ENCODE measurements at regions of chr6 and their contacts with region 1.

Region 1: DNA sequence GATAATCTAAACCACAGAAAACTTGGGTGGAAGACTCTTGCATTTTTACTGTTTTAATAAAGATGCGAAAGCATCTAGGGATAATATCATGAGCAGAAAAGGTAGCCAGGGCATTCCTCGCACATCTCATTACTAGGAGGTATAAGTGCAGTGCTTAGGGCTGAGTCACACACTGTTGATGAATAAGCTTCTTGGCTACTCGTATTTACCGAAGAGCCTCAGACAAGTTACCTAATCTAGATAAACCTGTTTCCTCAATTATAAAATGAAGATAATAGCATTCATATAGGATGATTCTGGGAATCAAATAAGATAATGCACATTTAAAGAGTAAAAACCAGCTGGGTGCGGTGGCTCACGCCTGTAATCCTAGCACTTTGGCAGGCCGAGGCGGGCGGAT is 791 bp upstream of the KIAA0319 start:
- DNase-seq: no peak
- H3K4me3 ChIP-seq: no peak overlapping the region
- H3K27ac ChIP-seq: no peak overlapping the region
- H3K4me1 ChIP-seq: peaks cover 9% of the 10 kb centered on the region
- H3K27me3 ChIP-seq: peaks cover 3 to 13% of the 10 kb centered on the region in 2 experiments
- CTCF ChIP-seq: no peak
- POLR2A ChIP-seq: no peak

Region 2: DNA sequence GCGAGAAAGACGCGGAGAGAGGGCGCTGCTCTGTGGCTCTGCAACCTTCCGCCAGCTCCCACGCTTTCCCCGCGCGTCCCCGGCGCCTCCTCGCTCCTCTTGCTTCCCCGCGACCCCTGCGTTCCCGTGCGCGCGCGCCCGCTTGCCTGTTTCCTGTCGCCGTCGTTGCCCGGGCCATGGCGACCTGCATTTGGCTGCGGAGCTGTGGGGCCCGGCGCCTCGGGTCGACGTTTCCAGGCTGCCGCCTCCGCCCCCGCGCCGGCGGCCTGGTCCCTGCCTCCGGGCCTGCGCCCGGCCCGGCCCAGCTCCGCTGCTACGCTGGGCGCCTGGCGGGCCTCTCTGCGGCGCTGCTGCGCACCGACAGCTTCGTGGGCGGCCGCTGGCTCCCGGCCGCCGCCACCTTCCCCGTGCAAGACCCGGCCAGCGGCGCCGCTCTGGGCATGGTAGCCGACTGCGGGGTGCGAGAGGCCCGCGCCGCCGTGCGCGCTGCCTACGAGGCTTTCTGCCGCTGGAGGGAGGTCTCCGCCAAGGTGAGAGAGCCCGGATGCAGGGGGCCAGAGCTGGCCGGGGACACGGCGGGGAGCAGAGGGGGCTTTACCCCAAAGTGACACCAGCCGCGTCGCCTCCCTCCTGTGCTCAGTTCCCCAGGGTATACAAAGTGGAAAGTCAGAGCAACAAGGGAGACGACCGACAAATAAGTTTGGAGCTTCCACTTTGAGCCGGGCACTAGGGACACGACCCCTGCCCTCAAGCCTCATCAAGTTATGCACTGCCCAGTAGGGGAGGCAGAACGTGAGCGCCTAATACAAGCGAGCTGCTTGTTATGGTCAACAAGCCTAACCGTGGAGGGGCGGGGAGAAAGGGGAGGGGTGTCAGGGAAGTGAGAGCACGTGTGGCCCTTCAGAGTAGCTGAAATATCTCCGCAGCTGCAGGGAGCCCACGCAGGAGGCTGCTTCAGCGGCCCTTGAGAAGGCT is 151.7 kb before region 1 on chr6 and contains the start of gene ALDH5A1:
- CTCF ChIA-PET with region 1: no interaction called
- POLR2A ChIA-PET with region 1: no interaction called
- dilution Hi-C with region 1: no loop called
- intact Hi-C with region 1: loop called (anchors 1 kb)
- DNase-seq: peak; percentile 50
- H3K4me3 ChIP-seq: peak within 1 kb of the TSS; percentile 29 to 50 (median 30)
- H3K27ac ChIP-seq: no peak within 1 kb of the TSS
- H3K4me1 ChIP-seq: peaks cover 4% of the 10 kb centered on the region
- H3K27me3 ChIP-seq: peaks cover 2 to 9% of the 10 kb centered on the region in 2 experiments
- CTCF ChIP-seq: peak in 1 of 2 donors; percentile 35
- POLR2A ChIP-seq: no peak
- total RNA-seq, gene ALDH5A1: 1.1 and 1.8 TPM in 2 replicates

Region 3: DNA sequence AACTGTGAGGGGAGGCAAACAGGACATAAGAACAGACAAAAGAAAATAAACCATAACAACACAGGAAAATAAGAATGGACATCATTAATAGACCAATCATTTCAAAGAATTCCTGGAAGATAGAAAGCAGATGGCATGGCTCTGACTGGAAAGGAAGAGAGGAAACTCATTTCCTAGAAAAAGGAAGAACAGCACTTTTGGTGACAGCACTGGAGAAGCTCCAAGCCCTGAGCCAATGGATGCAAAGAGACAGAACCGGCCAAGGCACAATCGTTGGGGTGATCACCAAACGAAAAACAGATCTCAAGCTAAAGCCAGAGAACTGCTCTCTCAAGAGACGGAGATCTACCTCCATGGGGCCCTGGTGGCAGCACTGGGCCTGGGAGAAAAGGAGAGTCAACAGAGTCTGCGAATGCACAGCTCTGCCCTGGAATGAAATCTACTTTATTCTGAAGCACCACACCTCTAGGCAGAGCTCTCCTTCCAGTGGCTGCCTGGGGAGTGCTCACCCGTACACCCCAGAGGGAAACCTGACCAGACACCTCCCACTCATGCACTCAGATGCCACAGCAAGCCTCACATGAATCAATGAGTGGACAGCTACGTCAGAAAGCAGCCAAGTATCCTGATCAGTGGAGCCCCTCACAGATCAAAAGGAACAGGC is 25.0 kb before region 1 on chr6:
- CTCF ChIA-PET with region 1: no interaction called
- POLR2A ChIA-PET with region 1: no interaction called
- dilution Hi-C with region 1: no loop called
- intact Hi-C with region 1: no loop called
- DNase-seq: no peak
- H3K4me3 ChIP-seq: no peak overlapping the region
- H3K27ac ChIP-seq: no peak overlapping the region
- H3K4me1 ChIP-seq: no peaks in the 10 kb centered on the region
- H3K27me3 ChIP-seq: peaks cover 0 to 3% of the 10 kb centered on the region in 2 experiments
- CTCF ChIP-seq: no peak
- POLR2A ChIP-seq: no peak

Region 4: GRCh38 chr6:24666641-24667377 is 20.0 kb after region 1 on chr6 and contains the starts of genes ACOT13 and TDP2:
- CTCF ChIA-PET with region 1: interaction called, 5 read pairs
- POLR2A ChIA-PET with region 1: interaction called, 5 read pairs
- dilution Hi-C with region 1: no loop called
- intact Hi-C with region 1: loop called (anchors 1 kb)
- DNase-seq: peak; percentile 98
- H3K4me3 ChIP-seq: peak within 1 kb of the TSS; percentile 71 to 92 (median 90)
- H3K27ac ChIP-seq: peak within 1 kb of the TSS; percentile 75
- H3K4me1 ChIP-seq: peaks cover 13% of the 10 kb centered on the region
- H3K27me3 ChIP-seq: no peaks in the 10 kb centered on the region
- CTCF ChIP-seq: peak; percentile 34 to 68
- POLR2A ChIP-seq: peak; percentile 83
- total RNA-seq, gene ACOT13: 15.3 and 24.1 TPM in 2 replicates
- total RNA-seq, gene TDP2: 35.3 and 39.2 TPM in 2 replicates

Region 5: DNA sequence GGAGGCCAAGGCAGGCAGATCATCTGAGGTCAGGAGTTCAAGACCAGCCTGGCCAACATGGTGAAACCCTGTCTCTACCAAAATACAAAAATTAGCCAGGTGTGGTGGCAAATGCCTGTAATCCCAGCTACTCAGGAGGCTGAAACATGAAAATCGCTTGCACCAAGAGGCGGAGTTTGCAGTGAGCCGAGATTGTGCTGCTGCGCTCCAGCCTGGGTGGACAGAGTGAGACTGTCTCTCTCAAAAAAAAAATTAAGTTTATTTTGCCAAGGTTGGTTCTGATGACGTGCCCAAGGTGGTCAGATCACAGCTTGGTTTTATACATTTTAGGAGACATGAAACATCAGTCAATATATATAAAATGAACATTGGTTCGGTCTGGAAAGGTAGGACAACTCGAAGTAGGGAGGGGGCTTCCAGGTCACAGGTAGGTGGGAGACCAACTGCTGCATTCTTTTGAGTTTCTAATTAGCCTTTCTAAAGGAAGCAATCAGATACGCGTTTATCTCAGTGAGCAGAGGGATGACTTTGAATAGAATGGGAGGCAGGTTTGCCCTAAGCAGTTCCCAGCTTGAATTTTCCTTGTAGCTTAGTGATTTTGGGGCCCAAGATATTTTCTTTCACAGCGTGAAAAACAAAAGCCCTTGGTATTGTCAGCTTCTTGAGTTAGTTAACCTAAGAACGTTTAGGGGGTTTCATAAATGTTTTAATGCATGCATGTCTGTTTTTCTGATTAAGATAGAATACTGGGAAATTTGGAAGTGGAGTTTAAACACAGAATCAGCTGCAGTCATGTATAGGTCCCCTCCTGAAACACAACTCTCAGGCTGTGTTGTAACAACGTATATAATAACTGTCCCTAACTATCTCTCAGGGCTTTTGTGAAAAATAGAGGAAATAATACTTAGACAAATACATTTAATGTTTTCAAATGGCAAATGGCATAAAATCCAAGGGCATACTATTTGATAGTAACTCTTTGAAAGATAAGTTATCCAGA is 36.8 kb after region 1 on chr6:
- CTCF ChIA-PET with region 1: no interaction called
- POLR2A ChIA-PET with region 1: no interaction called
- dilution Hi-C with region 1: no loop called
- intact Hi-C with region 1: loop called (anchors 1 kb)
- DNase-seq: no peak
- H3K4me3 ChIP-seq: no peak overlapping the region
- H3K27ac ChIP-seq: no peak overlapping the region
- H3K4me1 ChIP-seq: no peaks in the 10 kb centered on the region
- H3K27me3 ChIP-seq: no peaks in the 10 kb centered on the region
- CTCF ChIP-seq: no peak
- POLR2A ChIP-seq: no peak

Region 6: DNA sequence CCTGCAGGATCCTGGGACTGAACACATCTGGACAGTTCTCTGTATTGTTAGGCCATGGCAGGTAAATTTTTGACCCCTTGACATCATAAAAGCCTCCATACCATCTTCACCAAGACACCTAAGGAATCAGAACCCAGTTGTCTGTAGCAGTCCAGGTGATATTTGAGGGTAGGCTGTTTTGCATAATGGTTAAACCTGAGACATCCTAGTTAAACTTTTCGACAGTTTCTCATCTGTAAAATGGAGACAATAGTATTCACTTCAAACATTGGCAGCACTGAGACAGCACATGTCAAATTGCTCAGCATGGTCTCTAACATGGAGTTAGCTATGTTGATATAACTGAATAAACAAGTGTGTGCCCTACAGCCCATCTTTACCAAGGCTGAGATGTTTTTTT is 47.4 kb after region 1 on chr6:
- CTCF ChIA-PET with region 1: no interaction called
- POLR2A ChIA-PET with region 1: no interaction called
- dilution Hi-C with region 1: no loop called
- intact Hi-C with region 1: no loop called
- DNase-seq: no peak
- H3K4me3 ChIP-seq: no peak overlapping the region
- H3K27ac ChIP-seq: no peak overlapping the region
- H3K4me1 ChIP-seq: no peaks in the 10 kb centered on the region
- H3K27me3 ChIP-seq: no peaks in the 10 kb centered on the region
- CTCF ChIP-seq: no peak
- POLR2A ChIP-seq: no peak

Measured in endothelial cell of umbilical vein (primary cell).